ENCODE measurements at regions of chr7 and their contacts with region 1.

Region 1: GRCh38 chr7:142603870-142604448 is 145.3 kb upstream of the PRSS1 start:
- DNase-seq: peak in 1 of 2 experiments; percentile 58
- H3K4me3 ChIP-seq: peak overlapping the region in 1 of 4 experiments; percentile 43; a peak in 1 of 8 replicates
- H3K27ac ChIP-seq: no peak overlapping the region
- H3K4me1 ChIP-seq: no peaks in the 10 kb centered on the region
- H3K27me3 ChIP-seq: no peaks in the 10 kb centered on the region
- CTCF ChIP-seq: peak in 2 of 3 experiments; percentile 75 to 77; a peak in 3 of 4 replicates
- EP300 ChIP-seq: no peak
- POLR2A ChIP-seq: no peak
- RAD21 ChIP-seq: peak; percentile 86

Region 2: DNA sequence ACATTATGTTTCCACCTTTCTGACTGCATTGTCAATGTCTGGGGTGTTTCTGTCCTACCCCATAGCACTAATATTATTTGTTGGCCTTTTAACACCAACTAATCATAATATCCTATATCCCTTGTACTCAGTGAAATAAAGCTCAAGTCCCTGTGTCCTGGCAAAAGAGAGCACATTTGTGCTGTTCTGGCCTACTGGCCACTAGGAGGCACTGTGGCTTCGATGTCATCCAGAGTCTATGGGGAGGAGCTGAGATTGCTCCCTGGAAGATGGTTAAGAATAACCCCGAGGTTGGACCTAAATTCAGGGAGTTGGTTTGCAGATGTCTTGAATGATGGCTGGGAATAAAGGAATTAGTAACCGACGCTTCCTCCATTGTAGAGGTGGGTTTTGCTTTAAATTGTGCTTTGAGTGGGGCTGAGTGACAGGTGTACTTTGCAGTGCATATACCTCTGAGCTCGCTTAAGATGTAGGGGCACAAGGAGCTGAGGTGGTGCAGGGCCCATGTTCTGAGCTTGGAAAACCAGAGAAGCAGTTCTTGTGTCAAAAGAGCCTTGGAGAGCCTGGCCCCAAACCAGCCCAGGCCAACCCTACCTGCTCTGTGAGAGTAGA is 45.9 kb before region 1 on chr7:
- CTCF ChIA-PET with region 1: interaction called, 14 read pairs
- POLR2A ChIA-PET with region 1: no interaction called
- DNase-seq: peak; percentile 23 to 82
- H3K4me3 ChIP-seq: no peak overlapping the region
- H3K27ac ChIP-seq: no peak overlapping the region
- H3K4me1 ChIP-seq: no peaks in the 10 kb centered on the region
- H3K27me3 ChIP-seq: no peaks in the 10 kb centered on the region; a peak in 1 of 7 replicates
- CTCF ChIP-seq: peak; percentile 79 to 95 (median 84)
- EP300 ChIP-seq: no peak
- POLR2A ChIP-seq: no peak
- RAD21 ChIP-seq: peak; percentile 45 to 65; a peak in 3 of 4 replicates

Region 3: GRCh38 chr7:142626420-142627035 is 22.6 kb after region 1 on chr7:
- CTCF ChIA-PET with region 1: interaction called, 18 read pairs
- POLR2A ChIA-PET with region 1: no interaction called
- DNase-seq: peak in 1 of 2 experiments; percentile 94
- H3K4me3 ChIP-seq: no peak overlapping the region
- H3K27ac ChIP-seq: no peak overlapping the region
- H3K4me1 ChIP-seq: peaks cover 0 to 3% (median 0%) of the 10 kb centered on the region in 4 experiments; a peak in 1 of 7 replicates
- H3K27me3 ChIP-seq: no peaks in the 10 kb centered on the region; a peak in 1 of 7 replicates
- CTCF ChIP-seq: peak; percentile 60 to 85 (median 79)
- EP300 ChIP-seq: no peak
- POLR2A ChIP-seq: no peak
- RAD21 ChIP-seq: peak; percentile 55 to 62

Region 4: GRCh38 chr7:142632291-142633134 is 28.6 kb after region 1 on chr7:
- CTCF ChIA-PET with region 1: interaction called, 18 read pairs
- POLR2A ChIA-PET with region 1: no interaction called
- DNase-seq: peak; percentile 43 to 81
- H3K4me3 ChIP-seq: no peak overlapping the region
- H3K27ac ChIP-seq: no peak overlapping the region
- H3K4me1 ChIP-seq: no peaks in the 10 kb centered on the region
- H3K27me3 ChIP-seq: no peaks in the 10 kb centered on the region
- CTCF ChIP-seq: peak; percentile 59 to 90 (median 72)
- EP300 ChIP-seq: no peak
- POLR2A ChIP-seq: no peak
- RAD21 ChIP-seq: peak; percentile 87 to 92

Region 5: GRCh38 chr7:142720986-142721385 is 117.0 kb after region 1 on chr7:
- CTCF ChIA-PET with region 1: no interaction called
- POLR2A ChIA-PET with region 1: no interaction called
- DNase-seq: no peak
- H3K4me3 ChIP-seq: no peak overlapping the region
- H3K27ac ChIP-seq: no peak overlapping the region
- H3K4me1 ChIP-seq: no peaks in the 10 kb centered on the region
- H3K27me3 ChIP-seq: no peaks in the 10 kb centered on the region
- CTCF ChIP-seq: no peak
- EP300 ChIP-seq: no peak
- POLR2A ChIP-seq: no peak
- RAD21 ChIP-seq: no peak

Region 6: DNA sequence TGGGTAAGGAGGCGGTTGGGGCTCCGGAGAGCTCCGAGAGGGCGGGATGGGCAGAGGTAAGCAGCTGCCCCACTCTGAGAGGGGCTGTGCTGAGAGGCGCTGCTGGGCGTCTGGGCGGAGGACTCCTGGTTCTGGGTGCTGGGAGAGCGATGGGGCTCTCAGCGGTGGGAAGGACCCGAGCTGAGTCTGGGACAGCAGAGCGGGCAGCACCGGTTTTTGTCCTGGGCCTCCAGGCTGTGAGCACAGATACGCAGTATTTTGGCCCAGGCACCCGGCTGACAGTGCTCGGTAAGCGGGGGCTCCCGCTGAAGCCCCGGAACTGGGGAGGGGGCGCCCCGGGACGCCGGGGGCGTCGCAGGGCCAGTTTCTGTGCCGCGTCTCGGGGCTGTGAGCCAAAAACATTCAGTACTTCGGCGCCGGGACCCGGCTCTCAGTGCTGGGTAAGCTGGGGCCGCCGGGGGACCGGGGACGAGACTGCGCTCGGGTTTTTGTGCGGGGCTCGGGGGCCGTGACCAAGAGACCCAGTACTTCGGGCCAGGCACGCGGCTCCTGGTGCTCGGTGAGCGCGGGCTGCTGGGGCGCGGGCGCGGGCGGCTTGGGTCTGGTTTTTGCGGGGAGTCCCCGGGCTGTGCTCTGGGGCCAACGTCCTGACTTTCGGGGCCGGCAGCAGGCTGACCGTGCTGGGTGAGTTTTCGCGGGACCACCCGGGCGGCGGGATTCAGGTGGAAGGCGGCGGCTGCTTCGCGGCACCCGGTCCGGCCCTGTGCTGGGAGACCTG is 192.8 kb after region 1 on chr7:
- CTCF ChIA-PET with region 1: interaction called, 15 read pairs
- POLR2A ChIA-PET with region 1: no interaction called
- DNase-seq: peak in 1 of 2 experiments; percentile 64
- H3K4me3 ChIP-seq: peak overlapping the region; percentile 51 to 80 (median 69)
- H3K27ac ChIP-seq: no peak overlapping the region
- H3K4me1 ChIP-seq: peaks cover 14 to 30% (median 17%) of the 10 kb centered on the region in 4 experiments
- H3K27me3 ChIP-seq: peaks cover 1 to 36% (median 26%) of the 10 kb centered on the region in 4 experiments; a peak in 6 of 7 replicates
- CTCF ChIP-seq: no peak
- EP300 ChIP-seq: no peak
- POLR2A ChIP-seq: peak; percentile 21 to 43; a peak in 1 of 3 replicates
- RAD21 ChIP-seq: no peak

Region 7: DNA sequence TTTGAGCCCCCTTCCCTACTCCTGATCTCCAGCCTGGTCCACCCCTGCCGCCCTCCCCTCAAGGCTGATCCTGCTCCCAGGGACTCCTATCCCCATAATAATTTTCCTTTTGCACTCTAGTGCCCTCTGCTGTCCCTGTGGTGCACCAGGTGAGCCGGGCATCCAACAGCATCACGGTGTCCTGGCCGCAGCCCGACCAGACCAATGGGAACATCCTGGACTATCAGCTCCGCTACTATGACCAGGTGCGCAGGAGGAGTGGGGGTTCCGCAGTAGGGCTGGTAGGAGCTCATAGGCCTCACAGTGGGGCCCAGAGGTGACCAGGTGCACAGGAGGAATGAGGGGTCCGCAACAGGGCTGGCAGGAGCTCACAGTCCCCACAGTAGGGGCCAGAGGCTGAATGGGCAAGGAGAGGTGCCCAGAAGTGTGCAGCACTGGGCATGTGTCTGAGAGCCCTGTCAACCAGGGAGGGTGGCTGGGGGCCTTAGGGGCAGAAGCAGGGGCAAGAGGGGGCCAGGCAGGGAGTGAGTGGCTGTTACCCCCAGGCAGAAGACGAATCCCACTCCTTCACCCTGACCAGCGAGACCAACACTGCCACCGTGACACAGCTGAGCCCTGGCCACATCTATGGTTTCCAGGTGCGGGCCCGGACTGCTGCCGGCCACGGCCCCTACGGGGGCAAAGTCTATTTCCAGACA is 262.6 kb after region 1 on chr7:
- CTCF ChIA-PET with region 1: interaction called, 13 read pairs
- POLR2A ChIA-PET with region 1: no interaction called
- DNase-seq: peak in 1 of 2 experiments; percentile 82
- H3K4me3 ChIP-seq: no peak overlapping the region
- H3K27ac ChIP-seq: no peak overlapping the region
- H3K4me1 ChIP-seq: peaks cover 3 to 10% (median 9%) of the 10 kb centered on the region in 4 experiments; a peak in 6 of 7 replicates
- H3K27me3 ChIP-seq: no peaks in the 10 kb centered on the region
- CTCF ChIP-seq: peak; percentile 79 to 84 (median 83)
- EP300 ChIP-seq: no peak
- POLR2A ChIP-seq: no peak
- RAD21 ChIP-seq: peak; percentile 67 to 77